ENCODE measurements at regions of chr17 and their contacts with region 1.

Region 1: GRCh38 chr17:59903455-59903854 is 10.5 kb downstream of the RPS6KB1 start:
- DNase-seq: no peak
- ATAC-seq: no peak
- H3K4me3 Mint-ChIP-seq: no peak overlapping the region
- H3K27ac Mint-ChIP-seq: no peak overlapping the region
- H3K4me1 Mint-ChIP-seq: peaks cover 5% of the 10 kb centered on the region
- H3K27me3 Mint-ChIP-seq: no peaks in the 10 kb centered on the region

Region 2: DNA sequence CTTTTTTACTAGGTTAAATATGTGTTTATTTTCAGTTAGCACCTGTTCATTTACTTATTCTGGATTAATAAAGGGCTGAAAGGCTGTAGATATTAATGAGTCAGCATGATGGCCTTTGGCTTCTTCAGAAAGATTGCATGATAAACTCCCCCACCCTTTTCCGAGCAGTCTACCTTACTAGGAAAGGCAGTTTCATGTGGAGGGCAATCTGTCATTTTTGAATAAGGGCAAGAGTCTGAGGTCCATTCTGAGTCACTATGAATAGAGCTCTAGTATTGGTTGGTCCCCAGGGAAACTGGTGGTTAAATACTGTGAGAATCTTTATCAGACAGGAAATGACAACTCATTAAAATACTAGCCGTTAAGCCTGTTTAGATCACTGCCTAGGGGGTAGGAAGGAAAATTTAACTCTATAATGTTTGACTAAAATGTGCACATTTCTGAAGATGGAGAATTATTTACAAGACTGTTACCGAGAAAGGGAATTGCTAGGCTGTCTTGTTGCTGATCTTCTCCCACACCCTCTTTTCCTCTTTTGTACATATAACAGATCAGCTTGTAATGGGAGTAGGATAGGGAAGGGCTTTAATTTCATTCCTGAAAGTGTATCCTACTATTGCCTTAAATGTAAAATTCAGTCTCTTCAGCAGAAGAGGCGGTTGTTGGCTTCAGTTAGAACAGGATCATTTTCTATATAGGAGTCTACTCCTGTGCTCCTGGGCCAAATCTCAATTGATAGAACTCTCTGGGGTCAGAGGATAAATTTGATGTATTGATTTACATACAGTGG is 74.0 kb before region 1 on chr17:
- CTCF ChIA-PET with region 1: no interaction called
- POLR2A ChIA-PET with region 1: no interaction called
- DNase-seq: peak; percentile 72
- ATAC-seq: peak; percentile 81
- H3K4me3 Mint-ChIP-seq: peak overlapping the region; percentile 72
- H3K27ac Mint-ChIP-seq: peak overlapping the region; percentile 96
- H3K4me1 Mint-ChIP-seq: peaks cover 83% of the 10 kb centered on the region
- H3K27me3 Mint-ChIP-seq: no peaks in the 10 kb centered on the region

Region 3: GRCh38 chr17:59914274-59914854 is 10.9 kb after region 1 on chr17:
- CTCF ChIA-PET with region 1: interaction called, 10 read pairs
- POLR2A ChIA-PET with region 1: no interaction called
- DNase-seq: peak; percentile 35
- ATAC-seq: peak; percentile 69
- H3K4me3 Mint-ChIP-seq: no peak overlapping the region
- H3K27ac Mint-ChIP-seq: no peak overlapping the region
- H3K4me1 Mint-ChIP-seq: no peaks in the 10 kb centered on the region
- H3K27me3 Mint-ChIP-seq: no peaks in the 10 kb centered on the region

Region 4: GRCh38 chr17:60065136-60065535 is 161.7 kb after region 1 on chr17:
- CTCF ChIA-PET with region 1: no interaction called
- POLR2A ChIA-PET with region 1: no interaction called
- DNase-seq: no peak
- ATAC-seq: no peak
- H3K4me3 Mint-ChIP-seq: no peak overlapping the region
- H3K27ac Mint-ChIP-seq: no peak overlapping the region
- H3K4me1 Mint-ChIP-seq: no peaks in the 10 kb centered on the region
- H3K27me3 Mint-ChIP-seq: no peaks in the 10 kb centered on the region